Activated CD4-positive, alpha-beta memory T cell treated with anti-CD3 and anti-CD28 coated beads, Interleukin-2, amount 10 ng/mL, durations not matched to agents 7 days and 5 days (primary cell): ENCODE measurements at regions of chr1 and their contacts with region 1.

Region 1: DNA sequence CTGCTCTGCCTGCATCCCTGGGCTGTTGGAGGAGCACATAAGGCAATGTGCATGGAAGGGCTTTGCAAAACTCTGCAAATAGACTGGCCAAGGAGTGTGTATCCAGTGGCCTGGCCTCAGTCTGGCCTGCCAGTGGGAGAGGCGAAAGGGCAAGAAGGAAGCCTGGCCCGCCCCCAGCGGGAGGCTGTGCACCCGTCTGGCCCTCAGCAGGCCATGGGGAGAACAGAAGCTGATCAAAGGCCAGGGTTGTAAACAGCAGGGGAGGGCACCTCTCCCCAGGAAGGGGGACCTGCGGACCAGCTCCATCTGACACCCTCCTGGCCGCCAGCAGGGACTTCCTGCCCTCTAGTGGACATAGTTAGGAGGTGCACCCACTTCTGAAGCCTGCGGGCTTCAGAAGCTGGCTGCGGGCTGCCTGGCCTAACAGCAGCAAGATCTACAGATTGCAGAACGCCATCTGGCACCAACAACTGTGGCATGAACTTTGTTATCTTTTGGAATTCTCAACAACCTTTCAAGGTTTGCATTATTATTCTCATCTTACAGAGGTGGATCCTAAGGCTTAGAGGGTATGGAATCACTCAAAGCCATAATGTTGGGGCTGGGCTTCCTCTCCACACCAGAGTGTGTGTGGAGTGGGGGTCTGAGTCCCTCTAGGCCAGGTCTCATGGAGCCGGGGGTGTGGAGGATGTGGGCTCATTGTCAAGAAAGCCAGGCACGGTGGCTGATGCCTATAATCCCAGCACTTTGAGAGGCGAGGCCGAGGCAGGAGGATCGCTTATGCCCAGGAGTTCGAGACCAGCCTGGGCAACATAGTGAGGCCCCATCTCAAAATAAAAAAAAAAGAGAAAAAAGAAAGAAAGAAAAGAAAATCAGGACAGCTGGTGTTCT is 18.9 kb upstream of the CDK18 start:
- DNase-seq: peak; percentile 69
- H3K4me3 Mint-ChIP-seq: no peak overlapping the region
- H3K27ac Mint-ChIP-seq: no peak overlapping the region
- H3K4me1 Mint-ChIP-seq: peaks cover 16% of the 10 kb centered on the region
- H3K27me3 Mint-ChIP-seq: peaks cover 35% of the 10 kb centered on the region

Region 2: GRCh38 chr1:205354259-205354904 is 131.2 kb before region 1 on chr1:
- CTCF ChIA-PET with region 1: interaction called, 98 read pairs
- POLR2A ChIA-PET with region 1: interaction called, 5 read pairs
- DNase-seq: peak; percentile 67
- H3K4me3 Mint-ChIP-seq: no peak overlapping the region
- H3K27ac Mint-ChIP-seq: no peak overlapping the region
- H3K4me1 Mint-ChIP-seq: no peaks in the 10 kb centered on the region
- H3K27me3 Mint-ChIP-seq: peaks cover 21% of the 10 kb centered on the region

Region 3: GRCh38 chr1:205422993-205423625 is 62.5 kb before region 1 on chr1:
- CTCF ChIA-PET with region 1: interaction called, 13 read pairs
- POLR2A ChIA-PET with region 1: no interaction called
- DNase-seq: no peak
- H3K4me3 Mint-ChIP-seq: no peak overlapping the region
- H3K27ac Mint-ChIP-seq: no peak overlapping the region
- H3K4me1 Mint-ChIP-seq: no peaks in the 10 kb centered on the region
- H3K27me3 Mint-ChIP-seq: peaks cover 58% of the 10 kb centered on the region

Region 4: DNA sequence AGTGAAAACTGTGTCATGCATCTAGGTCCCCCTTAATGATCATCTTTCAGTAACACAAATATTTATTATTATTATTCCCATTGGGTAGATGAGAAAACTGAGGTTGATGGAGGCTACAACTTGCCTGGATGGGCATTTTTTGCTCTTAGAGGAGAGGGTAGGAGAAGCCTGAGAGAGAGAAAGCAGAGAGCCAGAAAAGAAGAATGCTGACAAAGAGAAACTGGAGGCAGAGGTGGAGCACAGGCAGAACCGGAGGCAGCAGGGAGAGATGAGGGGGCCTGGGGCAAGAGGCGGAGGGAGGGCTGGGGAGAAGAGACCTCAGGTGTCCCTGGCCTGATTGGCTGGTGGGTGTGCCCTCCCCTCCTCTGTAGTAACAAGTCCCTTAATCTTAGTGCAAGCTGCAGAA is 33.8 kb before region 1 on chr1:
- CTCF ChIA-PET with region 1: interaction called, 16 read pairs
- POLR2A ChIA-PET with region 1: no interaction called
- DNase-seq: no peak
- H3K4me3 Mint-ChIP-seq: no peak overlapping the region
- H3K27ac Mint-ChIP-seq: no peak overlapping the region
- H3K4me1 Mint-ChIP-seq: peaks cover 17% of the 10 kb centered on the region
- H3K27me3 Mint-ChIP-seq: peaks cover 43% of the 10 kb centered on the region

Region 5: DNA sequence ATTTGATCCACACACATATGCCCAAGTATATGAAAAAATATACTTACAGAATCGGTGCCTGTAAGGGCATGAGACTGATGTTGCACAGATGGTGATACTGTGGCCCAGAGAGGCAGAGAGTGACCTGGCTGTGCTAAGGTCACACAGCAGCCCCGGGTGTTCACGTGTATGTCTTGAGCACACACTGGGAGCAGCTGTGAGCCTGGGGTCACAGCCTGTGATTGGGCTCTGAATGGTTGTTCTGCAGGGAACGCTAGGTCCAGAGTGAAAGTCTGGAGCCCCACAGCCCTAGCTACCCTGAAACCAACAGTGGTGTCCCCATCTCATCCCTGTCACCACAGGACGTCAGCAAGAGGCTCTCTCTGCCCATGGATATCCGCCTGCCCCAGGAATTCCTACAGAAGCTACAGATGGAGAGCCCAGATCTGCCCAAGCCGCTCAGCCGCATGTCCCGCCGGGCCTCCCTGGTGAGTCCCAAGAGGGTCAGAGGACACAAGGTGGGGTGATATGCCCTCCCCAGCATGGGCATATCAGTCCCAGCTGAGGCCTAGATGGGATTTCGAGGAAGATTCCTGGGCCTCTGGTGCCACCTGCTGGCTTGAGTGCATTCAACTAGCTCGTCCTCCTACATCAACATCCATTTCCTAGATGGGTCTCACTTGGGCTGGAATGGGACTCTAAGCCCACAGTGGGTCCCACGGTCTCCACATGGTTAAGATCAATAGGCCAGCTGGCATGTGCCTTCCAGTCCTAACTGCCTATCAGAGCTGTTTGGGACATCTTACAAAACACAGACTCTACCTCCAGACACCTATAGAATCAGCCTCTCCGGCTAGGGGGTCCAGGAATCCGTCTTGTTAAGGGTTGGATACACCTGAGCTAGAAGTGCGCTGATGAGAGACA is 38.6 kb after region 1 on chr1:
- CTCF ChIA-PET with region 1: interaction called, 133 read pairs
- POLR2A ChIA-PET with region 1: no interaction called
- DNase-seq: peak; percentile 76
- H3K4me3 Mint-ChIP-seq: no peak overlapping the region
- H3K27ac Mint-ChIP-seq: no peak overlapping the region
- H3K4me1 Mint-ChIP-seq: no peaks in the 10 kb centered on the region
- H3K27me3 Mint-ChIP-seq: no peaks in the 10 kb centered on the region